Heart right ventricle (tissue), 16 donors: ENCODE measurements at regions of chr11 and their contacts with region 1.

Region 1: DNA sequence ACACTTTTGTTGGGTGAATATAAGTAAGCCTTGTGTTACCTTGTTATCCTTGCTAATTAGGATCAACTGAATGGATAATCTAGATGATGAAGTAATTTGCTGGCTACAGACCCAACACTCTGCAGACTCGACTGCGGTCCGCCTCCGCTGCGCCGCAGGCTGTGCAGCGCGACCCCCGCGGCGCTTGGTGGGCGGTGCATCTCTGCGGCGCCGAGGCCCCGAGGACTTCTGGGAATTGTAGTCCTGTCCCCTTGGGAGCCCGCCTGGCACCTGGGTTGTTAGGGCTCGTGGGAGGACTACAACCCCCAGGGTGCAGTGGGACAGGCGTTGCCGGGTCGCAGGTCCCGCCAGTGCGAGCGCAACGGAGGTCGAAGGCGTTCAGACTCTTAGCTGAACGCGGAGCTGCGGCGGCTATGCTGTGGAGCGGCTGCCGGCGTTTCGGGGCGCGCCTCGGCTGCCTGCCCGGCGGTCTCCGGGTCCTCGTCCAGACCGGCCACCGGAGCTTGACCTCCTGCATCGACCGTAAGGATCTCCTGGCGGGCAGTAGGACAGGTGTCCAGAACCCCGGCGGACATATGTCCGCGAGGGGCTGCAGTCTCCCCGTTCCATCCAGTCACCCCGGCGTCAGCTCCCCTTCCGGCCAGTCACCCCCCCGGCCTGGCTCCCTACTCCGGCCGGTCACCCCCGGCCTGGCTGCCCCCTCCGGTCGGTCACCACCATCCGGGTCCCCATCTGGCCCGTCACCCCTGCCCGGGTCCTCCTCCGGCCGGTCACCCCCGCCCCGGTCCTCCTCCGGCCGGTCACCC is at the starts of genes ACAD8 and THYN1:
- DNase-seq: peak; percentile 96 to 98
- ATAC-seq: peak; percentile 100
- H3K4me3 ChIP-seq: peak within 1 kb of the TSS; percentile 82 to 97 (median 93)
- H3K27ac ChIP-seq: peak within 1 kb of the TSS; percentile 16 to 86 (median 80)
- H3K4me1 ChIP-seq: peaks cover 7 to 36% (median 25%) of the 10 kb centered on the region in 9 donors
- H3K27me3 ChIP-seq: no peaks in the 10 kb centered on the region
- CTCF ChIP-seq: peak in 8 of 9 donors; percentile 12 to 64 (median 48)
- total RNA-seq, gene ACAD8: 26.6 to 52.2 (median 42.5) TPM
- total RNA-seq, gene THYN1: 32.2 to 47.5 (median 41.5) TPM

Region 2: DNA sequence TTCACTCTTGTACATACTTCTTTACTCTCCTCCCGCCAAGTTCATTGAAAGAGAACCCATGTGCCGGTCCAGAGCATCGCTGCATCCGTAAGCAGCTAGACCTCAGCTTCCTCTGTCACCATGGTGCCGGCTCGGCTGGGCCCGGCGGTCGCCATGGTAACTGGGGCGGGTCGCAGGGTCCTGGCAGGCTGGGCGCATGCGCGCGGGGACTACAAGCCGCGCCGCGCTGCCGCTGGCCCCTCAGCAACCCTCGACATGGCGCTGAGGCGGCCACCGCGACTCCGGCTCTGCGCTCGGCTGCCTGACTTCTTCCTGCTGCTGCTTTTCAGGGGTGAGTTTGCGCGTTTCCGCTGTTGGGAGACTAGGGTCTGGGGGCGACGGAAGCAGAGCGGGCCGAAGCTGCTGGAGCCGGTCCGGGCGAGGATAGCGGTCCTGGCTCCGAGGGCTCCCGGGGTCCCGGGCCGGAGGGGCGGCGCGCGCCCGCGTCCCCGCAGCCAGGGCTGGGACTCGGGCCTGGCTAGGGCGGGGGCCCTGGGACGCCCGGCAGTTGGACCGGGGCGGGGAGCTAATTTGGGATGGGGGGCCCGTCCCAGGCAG is 184.5 kb before region 1 on chr11 and contains the start of gene JAM3:
- intact Hi-C with region 1: loop called in 1 of 10 experiments (anchors 10 kb)
- DNase-seq: peak; percentile 96 to 97
- ATAC-seq: peak; percentile 98 to 99 (median 99)
- H3K4me3 ChIP-seq: peak within 1 kb of the TSS; percentile 66 to 96 (median 87)
- H3K27ac ChIP-seq: peak within 1 kb of the TSS; percentile 70 to 92 (median 86)
- H3K4me1 ChIP-seq: peaks cover 0 to 22% (median 18%) of the 10 kb centered on the region in 9 donors
- H3K27me3 ChIP-seq: peaks cover 0 to 31% (median 0%) of the 10 kb centered on the region in 7 donors
- CTCF ChIP-seq: no peak
- total RNA-seq, gene JAM3: 20.4 to 55.4 (median 34.9) TPM

Region 3: DNA sequence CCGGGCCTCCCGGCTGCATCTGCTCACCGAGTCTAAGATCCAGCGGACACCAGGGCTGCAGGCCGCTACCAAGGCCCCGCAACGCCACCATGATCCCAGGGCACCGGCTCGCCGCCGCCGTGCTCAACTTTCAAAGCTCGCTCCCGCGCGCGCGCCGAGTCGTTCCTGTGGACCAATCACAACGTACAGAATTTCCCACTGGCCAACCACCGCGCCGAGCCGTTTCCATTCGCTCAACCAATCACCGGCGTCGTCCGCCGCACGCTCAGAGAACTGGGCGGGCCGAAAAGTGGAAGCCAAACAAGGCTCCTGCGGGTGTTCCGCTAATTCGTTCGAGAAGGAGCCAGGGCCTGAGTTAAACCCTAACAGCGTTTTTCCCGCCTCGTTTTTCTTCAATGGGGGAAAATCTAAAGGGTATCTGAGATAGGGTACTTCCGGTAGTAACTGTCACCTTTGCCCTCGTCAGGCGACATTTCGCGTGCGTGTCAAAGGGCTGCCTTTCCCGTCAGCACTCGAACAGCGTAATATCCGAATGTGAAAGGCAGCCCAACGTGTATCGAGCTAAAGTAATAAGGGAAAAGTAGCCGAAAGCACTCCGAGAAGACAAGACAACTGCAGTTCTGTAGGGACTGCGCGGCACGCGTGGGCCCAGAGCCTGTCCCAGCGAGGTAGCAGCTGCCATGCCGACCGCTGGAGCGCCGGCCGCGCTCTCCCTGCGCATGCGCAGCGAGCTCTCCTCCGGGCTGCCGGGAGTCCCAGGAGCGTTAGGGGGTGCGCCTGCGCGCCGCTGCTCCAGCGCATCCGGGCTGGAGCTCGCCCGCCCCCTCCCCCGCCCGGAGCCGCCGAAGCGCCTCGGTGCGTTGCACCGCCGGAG is 29.3 kb before region 1 on chr11 and contains the starts of genes NCAPD3 and VPS26B:
- intact Hi-C with region 1: loop called in 5 of 10 experiments (anchors 1 to 2 kb)
- DNase-seq: peak; percentile 96 to 97
- ATAC-seq: peak; percentile 93 to 98 (median 95)
- H3K4me3 ChIP-seq: peak within 1 kb of the TSS; percentile 68 to 90 (median 76)
- H3K27ac ChIP-seq: peak within 1 kb of the TSS; percentile 81 to 97 (median 94)
- H3K4me1 ChIP-seq: peaks cover 6 to 49% (median 42%) of the 10 kb centered on the region in 9 donors
- H3K27me3 ChIP-seq: no peaks in the 10 kb centered on the region
- CTCF ChIP-seq: peak in 1 of 9 donors; percentile 9
- total RNA-seq, gene NCAPD3: 7.2 to 16.7 (median 11.4) TPM
- total RNA-seq, gene VPS26B: 30.7 to 49.6 (median 35.3) TPM